Calu3 (cell line): ENCODE measurements at regions of chr10 and their contacts with region 1.

Region 1: DNA sequence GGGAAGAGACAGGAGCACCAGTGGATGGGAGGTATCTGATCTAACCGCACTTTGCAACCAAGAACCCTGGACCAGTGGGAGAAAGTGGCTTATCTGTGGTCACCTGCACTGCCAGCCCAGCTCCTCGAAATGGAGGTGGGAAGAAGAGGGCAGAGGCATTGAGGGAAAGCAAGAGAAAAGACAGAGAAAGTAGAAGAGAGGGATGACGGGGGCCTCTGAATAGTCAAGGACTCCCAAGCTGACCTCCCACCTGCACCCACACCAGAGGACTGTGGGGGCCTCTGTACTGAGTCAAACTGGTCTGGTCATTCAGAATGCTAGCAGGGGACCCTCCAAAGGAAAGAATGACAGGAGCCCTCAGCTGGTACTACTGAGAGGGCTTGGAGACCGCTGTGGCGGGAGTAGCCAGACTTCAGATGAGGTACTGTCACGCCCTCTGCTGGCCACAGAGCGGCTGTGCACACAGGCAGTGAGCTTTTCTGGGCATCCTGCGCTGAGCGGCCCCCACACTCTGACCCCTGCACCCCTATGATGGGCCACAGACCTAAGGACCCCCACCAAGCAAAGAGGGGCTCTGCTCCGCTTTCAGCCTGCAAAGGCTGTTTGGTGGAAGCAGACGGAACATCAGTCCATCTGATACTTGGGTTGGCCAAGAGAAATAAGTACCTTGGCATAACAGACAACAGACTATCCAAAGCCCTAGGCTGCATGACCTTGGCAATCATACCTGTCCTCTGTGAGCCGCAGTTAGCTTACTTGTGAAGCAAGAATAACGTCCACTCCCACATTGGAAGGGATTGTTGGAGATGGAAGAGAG is 112.9 kb downstream of the COL13A1 start:
- DNase-seq: peak; percentile 80
- H3K4me3 Mint-ChIP-seq: no peak overlapping the region
- H3K27ac Mint-ChIP-seq: no peak overlapping the region
- H3K4me1 Mint-ChIP-seq: no peaks in the 10 kb centered on the region
- H3K27me3 Mint-ChIP-seq: peaks cover 98% of the 10 kb centered on the region
- CTCF ChIP-seq: peak; percentile 99

Region 2: GRCh38 chr10:69650589-69651261 is 263.9 kb before region 1 on chr10:
- CTCF ChIA-PET with region 1: no interaction called
- intact Hi-C with region 1: no loop called
- DNase-seq: no peak
- H3K4me3 Mint-ChIP-seq: no peak overlapping the region
- H3K27ac Mint-ChIP-seq: no peak overlapping the region
- H3K4me1 Mint-ChIP-seq: no peaks in the 10 kb centered on the region
- H3K27me3 Mint-ChIP-seq: peaks cover 38% of the 10 kb centered on the region
- CTCF ChIP-seq: no peak

Region 3: DNA sequence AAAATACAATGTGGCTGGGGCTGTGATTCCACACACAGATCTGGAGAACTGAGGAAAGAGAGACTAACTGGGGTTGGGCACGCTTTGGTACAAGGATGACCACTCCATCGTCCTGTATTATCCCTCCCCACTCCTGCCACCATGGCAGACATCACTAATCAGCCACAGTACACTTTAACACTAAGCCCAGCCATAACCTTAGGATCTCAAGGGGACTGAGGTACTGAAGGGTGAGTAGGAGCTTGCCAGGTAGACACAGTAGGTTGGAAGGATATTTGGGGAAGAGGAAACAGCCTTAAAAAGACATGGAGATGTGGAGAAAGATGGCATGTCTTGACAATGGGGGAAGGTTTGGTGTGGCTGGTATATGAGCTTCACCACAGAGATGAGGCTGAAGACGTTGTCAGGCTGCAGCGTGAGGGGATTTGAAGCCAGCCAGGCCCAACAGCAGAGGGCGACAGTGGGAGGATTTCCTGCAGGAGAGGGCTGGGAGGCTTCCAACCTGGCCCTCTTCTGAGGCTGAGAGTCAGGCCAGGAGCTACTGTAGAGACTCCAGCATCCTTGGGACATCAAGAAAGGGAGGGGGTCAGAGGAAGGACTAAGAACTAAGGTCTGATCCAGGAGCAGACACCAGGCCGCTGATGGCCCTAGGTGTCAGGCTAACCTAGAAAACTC is 171.5 kb before region 1 on chr10:
- CTCF ChIA-PET with region 1: interaction called, 8 read pairs
- intact Hi-C with region 1: loop called (anchors 5 kb)
- DNase-seq: peak; percentile 70
- H3K4me3 Mint-ChIP-seq: no peak overlapping the region
- H3K27ac Mint-ChIP-seq: no peak overlapping the region
- H3K4me1 Mint-ChIP-seq: no peaks in the 10 kb centered on the region
- H3K27me3 Mint-ChIP-seq: peaks cover 88% of the 10 kb centered on the region
- CTCF ChIP-seq: peak; percentile 62

Region 4: DNA sequence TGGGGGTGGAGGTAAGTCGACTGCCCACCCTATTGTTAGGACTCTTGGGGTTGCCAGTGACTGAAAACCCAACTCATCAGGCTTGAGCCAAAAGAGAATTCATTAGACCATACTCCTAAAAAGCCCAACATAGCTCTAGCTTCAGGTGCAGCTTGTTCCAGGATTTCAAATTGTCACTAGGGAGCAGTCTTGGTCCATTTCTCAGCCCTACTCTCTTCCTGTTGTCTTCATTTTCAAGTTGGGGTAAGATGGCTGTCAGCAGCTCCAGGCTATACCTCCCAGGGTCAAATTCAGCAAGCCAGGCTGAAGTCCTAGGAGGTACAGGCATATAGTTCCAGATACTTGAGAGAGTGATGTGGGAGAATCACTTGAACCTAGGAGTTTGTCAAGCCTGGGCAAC is 127.8 kb before region 1 on chr10:
- CTCF ChIA-PET with region 1: interaction called, 37 read pairs
- intact Hi-C with region 1: loop called (anchors 5 kb)
- DNase-seq: no peak
- H3K4me3 Mint-ChIP-seq: no peak overlapping the region
- H3K27ac Mint-ChIP-seq: no peak overlapping the region
- H3K4me1 Mint-ChIP-seq: no peaks in the 10 kb centered on the region
- H3K27me3 Mint-ChIP-seq: peaks cover 16% of the 10 kb centered on the region
- CTCF ChIP-seq: no peak

Region 5: DNA sequence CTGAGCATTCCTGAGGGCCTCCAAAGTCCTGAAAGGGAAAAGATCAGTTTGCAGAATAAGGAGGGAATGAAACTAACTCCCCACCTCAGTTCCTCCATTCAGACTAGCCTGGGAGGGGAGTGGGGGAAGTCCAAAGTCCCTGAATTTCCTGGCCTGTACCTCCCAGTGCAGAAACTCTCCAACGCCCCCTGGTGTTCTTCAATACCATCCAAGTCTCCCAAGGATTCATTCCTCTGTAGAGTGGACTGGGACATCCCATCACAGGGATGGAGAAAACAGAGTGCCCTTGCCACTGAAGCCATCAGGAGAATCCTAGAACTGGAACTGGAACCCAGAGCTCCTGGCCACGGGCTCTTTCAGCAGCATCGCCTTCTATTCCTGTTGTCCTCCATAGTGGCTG is 114.5 kb before region 1 on chr10:
- CTCF ChIA-PET with region 1: interaction called, 8 read pairs
- intact Hi-C with region 1: loop called (anchors 5 kb)
- DNase-seq: peak; percentile 79
- H3K4me3 Mint-ChIP-seq: no peak overlapping the region
- H3K27ac Mint-ChIP-seq: no peak overlapping the region
- H3K4me1 Mint-ChIP-seq: peaks cover 9% of the 10 kb centered on the region
- H3K27me3 Mint-ChIP-seq: peaks cover 89% of the 10 kb centered on the region
- CTCF ChIP-seq: peak; percentile 91

Region 6: DNA sequence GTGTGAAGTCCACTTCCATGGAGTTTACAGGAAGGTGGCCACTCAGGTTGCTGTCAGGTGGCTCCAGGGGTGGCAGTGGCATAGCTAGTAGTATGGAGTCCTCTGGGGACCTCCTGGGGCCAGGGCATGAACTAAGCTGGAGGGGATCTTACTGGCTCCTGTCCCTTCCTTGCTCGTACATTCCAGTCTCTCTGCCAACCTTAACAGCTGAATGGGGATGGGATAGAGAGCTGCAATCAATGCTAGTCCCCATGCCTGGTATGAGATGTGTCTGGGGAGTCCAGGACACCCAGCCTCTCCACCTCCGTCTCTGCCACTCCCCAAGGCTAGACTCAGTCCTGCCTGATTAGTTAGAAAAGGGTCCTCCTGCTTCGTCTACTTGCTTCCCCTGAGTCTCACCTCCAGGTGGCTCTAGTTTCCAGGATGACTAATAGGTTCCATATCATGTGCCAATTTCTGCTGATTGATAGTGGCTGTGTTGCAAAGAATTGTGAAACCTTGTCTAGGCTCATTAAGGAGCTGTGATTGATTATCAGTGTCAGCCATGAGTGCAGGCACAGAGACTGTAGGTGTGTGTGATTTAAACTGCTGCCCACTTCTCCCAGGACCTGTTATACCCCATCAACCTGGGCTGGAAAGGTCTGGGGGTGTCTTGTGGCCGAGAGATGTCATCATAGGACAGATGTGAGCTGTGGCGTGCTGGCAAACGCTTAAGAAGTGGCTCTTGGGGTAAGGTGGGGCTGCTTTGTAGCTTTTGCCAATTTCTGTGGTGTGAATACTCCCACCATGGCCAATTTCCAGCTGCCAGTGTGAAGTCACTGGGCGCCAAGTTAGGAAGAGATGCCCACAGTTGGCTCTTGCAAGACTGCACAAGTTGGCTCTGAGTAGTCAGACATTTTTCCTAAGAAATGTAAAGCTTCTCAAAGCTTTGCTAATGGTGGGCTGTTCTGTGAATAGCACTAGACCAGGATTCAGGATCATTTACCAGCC is 53.1 kb before region 1 on chr10:
- CTCF ChIA-PET with region 1: interaction called, 21 read pairs
- intact Hi-C with region 1: loop called (anchors 5 kb)
- DNase-seq: peak; percentile 80
- H3K4me3 Mint-ChIP-seq: peak overlapping the region; percentile 38
- H3K27ac Mint-ChIP-seq: peak overlapping the region; percentile 96
- H3K4me1 Mint-ChIP-seq: peaks cover 58% of the 10 kb centered on the region
- H3K27me3 Mint-ChIP-seq: peaks cover 5% of the 10 kb centered on the region
- CTCF ChIP-seq: peak; percentile 68

Region 7: GRCh38 chr10:69869291-69869961 is 45.2 kb before region 1 on chr10:
- CTCF ChIA-PET with region 1: interaction called, 17 read pairs
- intact Hi-C with region 1: loop called (anchors 5 kb)
- DNase-seq: peak; percentile 69
- H3K4me3 Mint-ChIP-seq: peak overlapping the region; percentile 4
- H3K27ac Mint-ChIP-seq: peak overlapping the region; percentile 6
- H3K4me1 Mint-ChIP-seq: peaks cover 55% of the 10 kb centered on the region
- H3K27me3 Mint-ChIP-seq: peaks cover 8% of the 10 kb centered on the region
- CTCF ChIP-seq: no peak

Region 8: GRCh38 chr10:69883310-69884023 is 31.1 kb before region 1 on chr10:
- CTCF ChIA-PET with region 1: interaction called, 33 read pairs
- intact Hi-C with region 1: loop called (anchors 1 kb)
- DNase-seq: peak; percentile 55
- H3K4me3 Mint-ChIP-seq: no peak overlapping the region
- H3K27ac Mint-ChIP-seq: no peak overlapping the region
- H3K4me1 Mint-ChIP-seq: peaks cover 10% of the 10 kb centered on the region
- H3K27me3 Mint-ChIP-seq: peaks cover 94% of the 10 kb centered on the region
- CTCF ChIP-seq: peak; percentile 45